HEK293 (cell line): ENCODE measurements at regions of chr6 and their contacts with region 1.

Region 1: GRCh38 chr6:136067731-136068341 is 182.3 kb downstream of the MTFR2 start:
- H3K4me3 ChIP-seq: no peak overlapping the region
- H3K27ac ChIP-seq: no peak overlapping the region
- H3K4me1 ChIP-seq: no peaks in the 10 kb centered on the region
- CTCF ChIP-seq: no peak

Region 2: GRCh38 chr6:136024711-136025110 is 43.1 kb before region 1 on chr6:
- CTCF ChIA-PET with region 1: no interaction called
- POLR2A ChIA-PET with region 1: no interaction called
- H3K4me3 ChIP-seq: no peak overlapping the region
- H3K27ac ChIP-seq: no peak overlapping the region
- H3K4me1 ChIP-seq: no peaks in the 10 kb centered on the region
- CTCF ChIP-seq: no peak

Region 3: DNA sequence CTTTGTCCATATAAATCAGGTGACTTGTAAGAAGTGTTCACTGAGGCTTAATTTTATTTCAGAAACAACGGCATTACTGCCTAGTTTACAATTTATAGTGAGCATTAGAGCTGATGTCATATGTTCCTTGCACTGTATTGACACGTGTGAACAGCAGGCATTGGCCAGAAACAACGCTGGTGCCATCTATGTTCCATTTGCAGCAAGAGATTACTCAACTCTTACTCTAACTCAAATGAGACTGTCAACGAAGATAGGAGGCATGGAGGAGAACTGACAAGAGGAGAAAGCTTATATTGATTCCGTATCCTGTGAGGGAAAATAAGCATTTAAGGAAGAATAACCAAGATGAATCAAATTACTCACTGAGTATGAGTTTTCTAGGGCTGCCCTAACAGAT is 133.9 kb after region 1 on chr6:
- CTCF ChIA-PET with region 1: interaction called, 10 read pairs
- POLR2A ChIA-PET with region 1: no interaction called
- H3K4me3 ChIP-seq: no peak overlapping the region
- H3K27ac ChIP-seq: no peak overlapping the region
- H3K4me1 ChIP-seq: no peaks in the 10 kb centered on the region
- CTCF ChIP-seq: peak; percentile 27